ENCODE measurements at regions of chr17 and their contacts with region 1.

Region 1: DNA sequence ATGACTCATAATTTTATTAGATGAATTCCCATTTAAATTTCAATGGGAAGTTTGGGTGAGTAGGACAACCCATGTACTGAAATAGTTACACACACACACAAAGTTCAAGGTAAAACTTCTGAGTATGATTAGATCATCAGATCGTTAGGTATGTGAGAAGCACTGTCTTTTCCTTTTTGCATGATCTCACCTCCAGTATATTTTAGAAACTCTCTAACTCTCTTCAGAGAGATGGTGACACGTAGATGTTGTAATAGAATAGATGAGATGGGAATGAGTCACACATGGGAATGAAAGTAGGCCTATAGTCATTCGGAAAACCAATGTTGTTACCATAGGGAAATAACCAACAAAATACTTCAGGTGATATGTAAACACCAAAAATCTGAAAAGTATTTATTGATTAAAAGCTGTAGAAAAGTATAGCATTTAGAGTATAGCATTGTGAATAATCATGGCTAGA is 22.2 kb downstream of the KRT23 start:
- DNase-seq: peak; percentile 99
- H3K4me3 ChIP-seq: no peak overlapping the region
- H3K27ac ChIP-seq: peak overlapping the region; percentile 100
- H3K4me1 ChIP-seq: peaks cover 56% of the 10 kb centered on the region
- H3K27me3 ChIP-seq: no peaks in the 10 kb centered on the region
- CTCF ChIP-seq: no peak

Region 2: DNA sequence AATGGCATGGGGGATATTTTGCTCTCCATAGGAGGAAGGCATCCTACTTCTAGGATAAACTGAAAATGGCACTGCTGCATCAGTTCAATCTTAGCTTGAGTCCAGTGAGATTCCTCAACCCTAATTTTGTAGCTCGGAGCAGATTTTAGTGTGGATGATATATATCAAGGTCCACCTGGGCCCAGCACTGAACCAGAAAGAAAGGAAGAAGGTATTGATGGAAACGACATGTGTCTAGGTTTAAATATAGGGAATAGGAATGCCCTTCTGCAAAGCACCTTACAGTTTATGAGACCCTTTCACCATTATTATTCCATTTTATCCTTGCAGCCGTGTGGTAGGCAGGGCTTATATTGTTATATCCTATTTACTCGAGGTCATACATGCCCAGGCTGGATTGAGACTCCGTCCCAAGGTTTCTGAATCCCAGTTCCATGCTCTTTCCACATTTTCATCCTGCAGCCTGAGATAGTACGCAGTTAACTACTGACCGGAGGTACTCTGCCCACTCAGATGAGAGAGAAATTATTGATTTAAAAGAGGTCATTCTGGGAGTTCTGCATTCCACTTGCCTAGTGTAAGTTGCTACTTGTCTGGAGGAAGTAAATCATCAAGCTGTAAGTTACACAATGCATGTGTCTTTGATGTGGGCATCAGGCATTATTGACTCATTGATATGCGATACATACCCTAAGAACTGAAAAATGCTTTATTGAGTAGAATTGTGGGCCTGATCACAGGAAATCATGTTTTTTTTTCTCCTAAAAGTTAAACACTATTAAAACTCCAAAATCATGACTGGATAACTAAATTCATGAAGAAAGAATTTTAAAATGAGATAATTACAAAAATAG is 41.4 kb after region 1 on chr17:
- CTCF ChIA-PET with region 1: no interaction called
- dilution Hi-C with region 1: loop called (anchors 5 kb)
- in situ Hi-C with region 1: loop called (anchors 5 kb)
- intact Hi-C with region 1: loop called (anchors 1 kb)
- DNase-seq: peak; percentile 99
- H3K4me3 ChIP-seq: no peak overlapping the region
- H3K27ac ChIP-seq: peak overlapping the region; percentile 99
- H3K4me1 ChIP-seq: peaks cover 75% of the 10 kb centered on the region
- H3K27me3 ChIP-seq: no peaks in the 10 kb centered on the region
- CTCF ChIP-seq: no peak

Region 3: GRCh38 chr17:40967581-40967980 is 52.4 kb after region 1 on chr17:
- CTCF ChIA-PET with region 1: no interaction called
- dilution Hi-C with region 1: no loop called
- in situ Hi-C with region 1: no loop called
- intact Hi-C with region 1: no loop called
- DNase-seq: no peak
- H3K4me3 ChIP-seq: no peak overlapping the region
- H3K27ac ChIP-seq: no peak overlapping the region
- H3K4me1 ChIP-seq: no peaks in the 10 kb centered on the region
- H3K27me3 ChIP-seq: no peaks in the 10 kb centered on the region
- CTCF ChIP-seq: no peak

Region 4: GRCh38 chr17:41098476-41098875 is 183.2 kb after region 1 on chr17:
- CTCF ChIA-PET with region 1: no interaction called
- dilution Hi-C with region 1: no loop called
- in situ Hi-C with region 1: no loop called
- intact Hi-C with region 1: loop called (anchors 1 kb)
- DNase-seq: peak; percentile 76
- H3K4me3 ChIP-seq: no peak overlapping the region
- H3K27ac ChIP-seq: peak overlapping the region; percentile 40
- H3K4me1 ChIP-seq: peaks cover 13% of the 10 kb centered on the region
- H3K27me3 ChIP-seq: no peaks in the 10 kb centered on the region
- CTCF ChIP-seq: no peak

Region 5: GRCh38 chr17:41530062-41531051 is 615.1 kb after region 1 on chr17:
- CTCF ChIA-PET with region 1: no interaction called
- dilution Hi-C with region 1: loop called (anchors 10 kb)
- in situ Hi-C with region 1: no loop called
- intact Hi-C with region 1: no loop called
- DNase-seq: peak; percentile 91
- H3K4me3 ChIP-seq: no peak overlapping the region
- H3K27ac ChIP-seq: peak overlapping the region; percentile 67
- H3K4me1 ChIP-seq: peaks cover 27% of the 10 kb centered on the region
- H3K27me3 ChIP-seq: no peaks in the 10 kb centered on the region
- CTCF ChIP-seq: no peak

Region 6: DNA sequence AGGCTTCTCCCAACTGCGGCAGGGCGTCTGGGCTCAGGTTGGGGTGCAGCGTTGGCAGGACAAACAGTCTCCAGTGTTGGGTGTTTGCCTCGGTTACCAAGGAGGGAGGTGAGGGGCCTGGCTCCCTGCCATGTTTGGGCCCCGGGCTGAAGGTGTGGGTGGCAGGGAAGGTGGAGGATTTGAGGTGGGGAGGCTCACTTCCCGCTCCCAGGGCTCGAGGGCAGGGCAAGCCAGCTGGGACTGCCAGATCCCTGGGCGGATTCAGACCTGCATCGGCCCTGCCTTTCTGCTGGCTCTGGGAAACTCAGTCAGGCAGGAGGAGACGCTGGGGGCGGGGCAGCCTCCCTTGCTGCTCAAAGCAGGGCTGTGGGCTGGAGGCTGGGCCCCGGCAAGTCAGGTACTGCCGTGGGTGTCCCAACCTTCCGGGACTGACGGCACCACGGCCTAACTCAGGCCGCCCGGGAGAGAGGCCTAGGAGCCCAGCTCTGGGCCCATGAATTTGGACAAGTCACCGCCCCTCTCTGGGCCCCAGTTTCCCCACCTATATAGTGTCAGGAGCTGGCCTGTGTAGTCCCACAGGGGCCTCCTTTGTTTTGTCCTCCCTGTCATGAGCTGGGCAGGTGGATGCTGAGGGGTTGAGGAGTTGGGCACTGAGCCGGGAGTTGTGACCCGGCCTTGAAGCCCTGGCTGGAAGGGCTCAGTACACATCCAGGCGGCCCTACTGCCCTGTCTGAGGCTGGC is 740.6 kb after region 1 on chr17:
- CTCF ChIA-PET with region 1: no interaction called
- dilution Hi-C with region 1: no loop called
- in situ Hi-C with region 1: no loop called
- intact Hi-C with region 1: loop called (anchors 1 kb)
- DNase-seq: peak; percentile 100
- H3K4me3 ChIP-seq: no peak overlapping the region
- H3K27ac ChIP-seq: peak overlapping the region; percentile 100
- H3K4me1 ChIP-seq: peaks cover 92% of the 10 kb centered on the region
- H3K27me3 ChIP-seq: no peaks in the 10 kb centered on the region
- CTCF ChIP-seq: no peak